ENCODE measurements at regions of chr13 and their contacts with region 1.

Region 1: GRCh38 chr13:49278211-49278610 is 30.5 kb downstream of the CDADC1 start:
- DNase-seq: no peak
- H3K4me3 ChIP-seq: no peak overlapping the region
- H3K27ac ChIP-seq: no peak overlapping the region
- H3K4me1 ChIP-seq: no peaks in the 10 kb centered on the region
- H3K27me3 ChIP-seq: no peaks in the 10 kb centered on the region
- CTCF ChIP-seq: no peak

Region 2: GRCh38 chr13:48783181-48783630 is 495.0 kb before region 1 on chr13:
- CTCF ChIA-PET with region 1: no interaction called
- POLR2A ChIA-PET with region 1: no interaction called
- intact Hi-C with region 1: loop called (anchors 10 kb)
- DNase-seq: peak in 1 of 2 experiments; percentile 45
- H3K4me3 ChIP-seq: no peak overlapping the region
- H3K27ac ChIP-seq: no peak overlapping the region
- H3K4me1 ChIP-seq: no peaks in the 10 kb centered on the region
- H3K27me3 ChIP-seq: no peaks in the 10 kb centered on the region
- CTCF ChIP-seq: no peak

Region 3: GRCh38 chr13:49292742-49293486 is 14.7 kb after region 1 on chr13:
- CTCF ChIA-PET with region 1: no interaction called
- POLR2A ChIA-PET with region 1: interaction called, 12 read pairs
- intact Hi-C with region 1: no loop called
- DNase-seq: no peak
- H3K4me3 ChIP-seq: no peak overlapping the region
- H3K27ac ChIP-seq: no peak overlapping the region
- H3K4me1 ChIP-seq: no peaks in the 10 kb centered on the region
- H3K27me3 ChIP-seq: no peaks in the 10 kb centered on the region
- CTCF ChIP-seq: no peak

Region 4: DNA sequence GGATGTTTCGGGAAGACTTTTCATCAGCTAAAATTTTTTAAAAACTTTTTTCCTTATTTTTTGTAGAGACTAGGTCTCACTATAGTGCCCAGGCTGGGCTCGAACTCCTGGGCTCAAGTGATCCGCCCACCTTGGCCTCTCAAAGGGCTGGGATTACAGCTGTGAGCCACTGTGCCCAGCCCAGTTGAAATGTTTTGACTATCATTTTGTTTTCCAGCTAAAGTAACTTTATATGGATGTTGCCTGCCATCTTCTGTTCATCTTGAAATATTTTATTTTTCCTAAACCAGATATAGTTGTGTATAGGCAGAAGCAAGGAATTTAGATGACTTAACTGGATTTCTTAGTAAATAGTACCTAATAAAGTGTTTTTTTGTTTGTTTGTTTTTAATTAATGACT is 158.7 kb after region 1 on chr13:
- CTCF ChIA-PET with region 1: interaction called, 11 read pairs
- POLR2A ChIA-PET with region 1: no interaction called
- intact Hi-C with region 1: no loop called
- DNase-seq: no peak
- H3K4me3 ChIP-seq: no peak overlapping the region
- H3K27ac ChIP-seq: no peak overlapping the region
- H3K4me1 ChIP-seq: no peaks in the 10 kb centered on the region
- H3K27me3 ChIP-seq: no peaks in the 10 kb centered on the region
- CTCF ChIP-seq: peak; percentile 51; the same call in 1 of the 2 replicates